Calu3 (cell line): ENCODE measurements at regions of chr4 and their contacts with region 1.

Region 1: GRCh38 chr4:111641955-111642579 is 503.2 kb upstream of the FAM241A start:
- DNase-seq: peak; percentile 75
- H3K4me3 Mint-ChIP-seq: no peak overlapping the region
- H3K27ac Mint-ChIP-seq: no peak overlapping the region
- H3K4me1 Mint-ChIP-seq: peaks cover 9% of the 10 kb centered on the region
- H3K27me3 Mint-ChIP-seq: no peaks in the 10 kb centered on the region
- CTCF ChIP-seq: peak; percentile 73

Region 2: DNA sequence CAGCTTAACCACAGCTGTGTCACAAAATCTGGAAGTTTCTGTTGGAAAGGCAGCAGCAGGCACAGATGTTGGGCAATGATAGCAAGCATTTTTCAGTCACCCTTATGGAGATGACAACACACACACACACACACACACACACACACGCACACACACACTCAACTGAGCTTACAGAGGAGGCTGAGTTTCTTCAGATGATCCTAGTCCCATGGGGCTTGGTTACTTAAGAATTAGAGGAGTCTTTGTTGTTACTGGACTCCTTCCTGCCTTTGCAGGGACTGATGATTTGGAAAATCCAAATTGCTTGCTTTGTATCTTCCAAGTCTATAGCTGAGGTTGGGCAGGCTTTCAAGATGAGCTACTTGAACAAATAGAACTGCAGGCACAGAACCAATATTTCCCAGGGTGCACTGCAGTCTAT is 279.1 kb before region 1 on chr4:
- CTCF ChIA-PET with region 1: no interaction called
- intact Hi-C with region 1: no loop called
- DNase-seq: no peak
- H3K4me3 Mint-ChIP-seq: no peak overlapping the region
- H3K27ac Mint-ChIP-seq: no peak overlapping the region
- H3K4me1 Mint-ChIP-seq: no peaks in the 10 kb centered on the region
- H3K27me3 Mint-ChIP-seq: no peaks in the 10 kb centered on the region
- CTCF ChIP-seq: no peak

Region 3: GRCh38 chr4:111778543-111778942 is 136.5 kb after region 1 on chr4:
- CTCF ChIA-PET with region 1: no interaction called
- intact Hi-C with region 1: loop called (anchors 2 kb)
- DNase-seq: no peak
- H3K4me3 Mint-ChIP-seq: no peak overlapping the region
- H3K27ac Mint-ChIP-seq: no peak overlapping the region
- H3K4me1 Mint-ChIP-seq: peaks cover 11% of the 10 kb centered on the region
- H3K27me3 Mint-ChIP-seq: no peaks in the 10 kb centered on the region
- CTCF ChIP-seq: no peak

Region 4: DNA sequence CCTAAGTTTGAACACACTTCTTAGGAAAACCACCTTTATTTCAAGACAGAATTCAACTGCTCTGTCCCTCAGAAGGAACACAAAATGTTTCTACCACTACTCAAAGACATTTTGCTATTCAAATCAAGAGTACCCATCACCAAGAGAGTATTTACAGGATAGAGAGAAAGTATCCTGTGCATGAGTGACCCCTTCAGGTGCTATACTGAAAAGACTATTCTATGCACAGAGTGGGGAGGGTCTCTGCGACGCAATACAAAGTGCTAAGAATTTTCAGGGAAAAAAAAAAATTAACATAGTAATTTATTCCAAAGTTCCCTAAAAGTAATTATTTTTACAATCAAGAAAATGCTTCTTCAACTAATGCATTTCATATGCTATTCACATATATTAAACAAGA is 156.8 kb after region 1 on chr4:
- CTCF ChIA-PET with region 1: no interaction called
- intact Hi-C with region 1: loop called (anchors 1 kb)
- DNase-seq: no peak
- H3K4me3 Mint-ChIP-seq: no peak overlapping the region
- H3K27ac Mint-ChIP-seq: no peak overlapping the region
- H3K4me1 Mint-ChIP-seq: no peaks in the 10 kb centered on the region
- H3K27me3 Mint-ChIP-seq: no peaks in the 10 kb centered on the region
- CTCF ChIP-seq: no peak

Region 5: DNA sequence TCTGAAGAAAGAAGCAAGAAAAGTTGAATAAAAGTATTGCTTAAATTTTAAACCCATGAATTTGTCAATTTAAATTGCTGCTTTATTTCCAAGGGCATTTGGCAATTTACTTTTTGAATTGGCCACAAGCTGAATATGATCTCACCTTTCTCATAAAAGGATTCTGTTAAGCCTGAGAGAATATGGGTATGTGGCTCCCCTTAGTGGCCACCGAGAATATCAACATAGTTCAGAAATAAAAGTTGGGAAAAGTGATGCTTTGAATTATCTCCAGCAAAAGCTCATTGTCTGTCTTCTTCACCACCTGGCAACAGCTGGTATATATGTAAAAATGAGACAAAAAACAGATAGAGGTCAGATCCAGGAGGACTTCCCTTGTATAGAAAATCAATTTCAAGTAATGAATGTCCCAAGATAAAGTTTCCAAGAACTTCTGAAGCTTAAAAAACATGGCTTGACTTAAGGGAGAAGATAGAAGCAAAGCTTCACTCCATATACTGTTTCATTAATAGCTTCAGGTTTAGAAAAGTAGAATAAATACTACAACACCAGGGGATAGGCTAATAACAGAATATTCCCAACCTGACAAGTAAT is 212.5 kb after region 1 on chr4:
- CTCF ChIA-PET with region 1: interaction called, 14 read pairs
- intact Hi-C with region 1: loop called (anchors 1 kb)
- DNase-seq: peak; percentile 48
- H3K4me3 Mint-ChIP-seq: no peak overlapping the region
- H3K27ac Mint-ChIP-seq: no peak overlapping the region
- H3K4me1 Mint-ChIP-seq: peaks cover 11% of the 10 kb centered on the region
- H3K27me3 Mint-ChIP-seq: no peaks in the 10 kb centered on the region
- CTCF ChIP-seq: peak; percentile 27

Region 6: GRCh38 chr4:111937368-111937767 is 295.3 kb after region 1 on chr4:
- CTCF ChIA-PET with region 1: interaction called, 4 read pairs
- intact Hi-C with region 1: loop called (anchors 1 kb)
- DNase-seq: no peak
- H3K4me3 Mint-ChIP-seq: no peak overlapping the region
- H3K27ac Mint-ChIP-seq: no peak overlapping the region
- H3K4me1 Mint-ChIP-seq: no peaks in the 10 kb centered on the region
- H3K27me3 Mint-ChIP-seq: no peaks in the 10 kb centered on the region
- CTCF ChIP-seq: no peak

Region 7: GRCh38 chr4:112031712-112032328 is 389.8 kb after region 1 on chr4:
- CTCF ChIA-PET with region 1: no interaction called
- intact Hi-C with region 1: loop called (anchors 2 kb)
- DNase-seq: peak; percentile 37
- H3K4me3 Mint-ChIP-seq: no peak overlapping the region
- H3K27ac Mint-ChIP-seq: no peak overlapping the region
- H3K4me1 Mint-ChIP-seq: no peaks in the 10 kb centered on the region
- H3K27me3 Mint-ChIP-seq: no peaks in the 10 kb centered on the region
- CTCF ChIP-seq: peak; percentile 43

Region 8: GRCh38 chr4:112060212-112060611 is 418.1 kb after region 1 on chr4:
- CTCF ChIA-PET with region 1: interaction called, 4 read pairs
- intact Hi-C with region 1: loop called (anchors 10 kb)
- DNase-seq: peak; percentile 9
- H3K4me3 Mint-ChIP-seq: no peak overlapping the region
- H3K27ac Mint-ChIP-seq: no peak overlapping the region
- H3K4me1 Mint-ChIP-seq: no peaks in the 10 kb centered on the region
- H3K27me3 Mint-ChIP-seq: no peaks in the 10 kb centered on the region
- CTCF ChIP-seq: no peak

Region 9: DNA sequence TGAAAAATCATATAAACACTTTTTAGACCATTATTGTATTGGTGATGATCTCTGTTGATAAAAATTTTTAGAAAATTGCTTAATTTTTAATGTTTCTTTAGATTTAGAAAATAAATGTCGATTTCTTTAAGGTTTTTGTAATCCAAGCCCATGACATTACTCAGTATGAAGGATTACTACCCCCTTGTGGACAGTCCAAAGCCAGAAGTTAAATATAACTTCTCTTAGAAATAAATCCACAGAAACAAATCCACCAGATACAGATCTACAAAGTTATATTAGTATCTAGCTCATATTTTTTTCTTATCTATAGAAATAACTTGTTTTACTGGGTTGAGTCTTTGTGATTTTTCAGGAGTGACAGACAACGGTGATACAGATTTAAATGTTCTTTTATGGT is 624.8 kb after region 1 on chr4:
- CTCF ChIA-PET with region 1: no interaction called
- intact Hi-C with region 1: no loop called
- DNase-seq: no peak
- H3K4me3 Mint-ChIP-seq: no peak overlapping the region
- H3K27ac Mint-ChIP-seq: no peak overlapping the region
- H3K4me1 Mint-ChIP-seq: no peaks in the 10 kb centered on the region
- H3K27me3 Mint-ChIP-seq: no peaks in the 10 kb centered on the region
- CTCF ChIP-seq: no peak